Posterior vena cava (tissue), 2 donors: ENCODE measurements at regions of chr9 and their contacts with region 1.

Region 1: GRCh38 chr9:120210274-120210673 is 369.7 kb downstream of the CDK5RAP2 start:
- DNase-seq: no peak

Region 2: DNA sequence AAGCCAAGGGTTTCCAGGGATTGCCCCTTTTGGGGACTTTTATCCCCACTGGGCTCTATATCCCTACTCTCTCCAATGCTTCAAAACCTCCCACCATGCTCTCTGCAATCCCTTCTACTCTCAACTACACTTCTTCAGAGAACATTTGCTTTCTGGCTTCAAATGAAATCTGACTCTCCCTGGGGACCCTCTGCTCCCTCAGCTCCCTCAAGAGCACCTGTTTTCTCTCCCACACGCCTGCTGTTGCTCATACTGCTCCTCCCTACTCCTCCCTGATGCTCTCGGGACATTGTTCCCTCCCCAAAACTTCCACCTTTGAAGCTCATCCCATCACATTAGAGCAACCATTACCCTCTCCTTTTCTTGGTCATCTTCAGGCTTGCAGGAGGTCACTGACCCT is 24.8 kb after region 1 on chr9:
- intact Hi-C with region 1: loop called in 1 of 2 experiments (anchors 1 kb)
- DNase-seq: no peak